Caco-2 (cell line): ENCODE measurements at regions of chr10 and their contacts with region 1.

Region 1: DNA sequence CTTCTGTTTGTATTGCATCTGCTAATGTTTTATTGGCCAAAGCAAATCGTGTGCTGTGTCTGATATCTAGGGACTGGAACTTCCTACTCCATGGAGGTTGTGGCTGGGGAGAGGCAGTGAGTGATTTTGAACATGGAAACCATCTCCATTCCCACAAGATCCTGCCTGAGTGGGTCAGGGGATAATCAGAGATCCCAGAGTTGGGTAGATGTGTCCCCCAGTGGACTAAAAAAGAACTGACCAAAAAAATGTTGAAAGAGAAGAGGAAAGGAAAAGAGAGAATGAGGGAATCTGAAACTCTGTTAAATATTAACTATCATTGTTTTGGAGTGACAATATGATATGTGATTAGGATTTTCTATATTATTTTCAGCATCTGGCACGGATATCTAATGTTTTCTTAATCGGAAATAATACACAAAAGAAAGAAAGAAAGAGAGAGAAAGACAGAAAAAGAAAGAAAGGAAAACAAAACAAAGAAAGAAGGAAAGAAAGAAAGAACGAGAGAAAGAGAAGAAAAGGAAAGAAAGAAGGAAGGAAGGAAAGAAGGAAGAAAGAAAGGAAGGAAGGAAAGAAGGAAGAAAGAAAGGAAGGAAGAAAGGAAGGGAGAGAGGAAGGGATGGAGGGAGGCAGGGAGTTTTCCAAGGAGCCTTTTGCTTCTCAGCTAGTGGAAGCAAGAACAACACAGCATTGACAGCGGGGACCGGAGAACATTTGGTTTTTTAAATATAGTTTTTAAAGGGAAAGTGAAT is 638.5 kb downstream of the CCSER2 start:
- DNase-seq: peak in 1 of 2 experiments; percentile 4
- H3K4me3 ChIP-seq: no peak overlapping the region
- H3K4me3 Mint-ChIP-seq: no peak overlapping the region
- H3K27ac Mint-ChIP-seq: no peak overlapping the region
- H3K4me1 ChIP-seq: no peaks in the 10 kb centered on the region
- H3K4me1 Mint-ChIP-seq: peaks cover 7% of the 10 kb centered on the region
- H3K27me3 ChIP-seq: no peaks in the 10 kb centered on the region
- H3K27me3 Mint-ChIP-seq: peaks cover 9% of the 10 kb centered on the region
- CTCF ChIP-seq: peak in 1 of 2 experiments; percentile 0

Region 2: DNA sequence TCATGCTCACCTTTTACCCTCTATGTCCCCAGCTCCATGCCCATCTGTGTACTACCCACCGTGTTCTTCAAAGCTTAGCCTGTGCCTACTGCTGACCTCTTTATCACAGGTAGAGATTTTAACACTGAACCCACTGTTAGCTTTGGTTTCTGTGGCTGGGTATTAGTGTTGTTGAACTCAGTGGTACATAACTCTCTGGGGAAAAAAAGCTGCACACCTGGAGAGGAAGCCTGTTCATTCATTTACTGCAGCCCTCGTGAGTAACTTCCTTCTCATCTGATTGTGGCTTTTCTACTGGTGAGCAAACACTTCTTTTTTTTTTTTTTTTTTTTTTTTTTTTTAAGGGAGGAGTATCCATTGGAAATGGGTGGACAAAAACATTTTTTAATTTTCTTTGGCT is 312.2 kb before region 1 on chr10:
- CTCF ChIA-PET with region 1: no interaction called
- POLR2A ChIA-PET with region 1: no interaction called
- intact Hi-C with region 1: no loop called
- DNase-seq: no peak
- H3K4me3 ChIP-seq: no peak overlapping the region
- H3K4me3 Mint-ChIP-seq: no peak overlapping the region
- H3K27ac Mint-ChIP-seq: no peak overlapping the region
- H3K4me1 ChIP-seq: no peaks in the 10 kb centered on the region
- H3K4me1 Mint-ChIP-seq: no peaks in the 10 kb centered on the region
- H3K27me3 ChIP-seq: no peaks in the 10 kb centered on the region
- H3K27me3 Mint-ChIP-seq: no peaks in the 10 kb centered on the region
- CTCF ChIP-seq: no peak

Region 3: GRCh38 chr10:84845624-84846261 is 121.1 kb before region 1 on chr10:
- CTCF ChIA-PET with region 1: no interaction called
- POLR2A ChIA-PET with region 1: no interaction called
- intact Hi-C with region 1: loop called (anchors 2 kb)
- DNase-seq: peak; percentile 44 to 51
- H3K4me3 ChIP-seq: no peak overlapping the region
- H3K4me3 Mint-ChIP-seq: no peak overlapping the region
- H3K27ac Mint-ChIP-seq: no peak overlapping the region
- H3K4me1 ChIP-seq: no peaks in the 10 kb centered on the region
- H3K4me1 Mint-ChIP-seq: no peaks in the 10 kb centered on the region
- H3K27me3 ChIP-seq: no peaks in the 10 kb centered on the region
- H3K27me3 Mint-ChIP-seq: peaks cover 2% of the 10 kb centered on the region
- CTCF ChIP-seq: peak; percentile 32 to 69